SK-N-SH (cell line): ENCODE measurements at regions of chr12 and their contacts with region 1.

Region 1: GRCh38 chr12:22856178-22856577 is 231.2 kb downstream of the ETNK1 start:
- DNase-seq: peak; percentile 37
- H3K4me3 ChIP-seq: no peak overlapping the region
- H3K27ac ChIP-seq: no peak overlapping the region
- H3K4me1 ChIP-seq: no peaks in the 10 kb centered on the region; a peak in 1 of 4 replicates
- H3K27me3 ChIP-seq: no peaks in the 10 kb centered on the region; the same call in 1 of the 2 replicates
- CTCF ChIP-seq: peak; percentile 74
- EP300 ChIP-seq: no peak
- RAD21 ChIP-seq: peak; percentile 90

Region 2: GRCh38 chr12:22866406-22866805 is 10.2 kb after region 1 on chr12:
- CTCF ChIA-PET with region 1: interaction called, 14 read pairs
- POLR2A ChIA-PET with region 1: no interaction called
- DNase-seq: no peak
- H3K4me3 ChIP-seq: no peak overlapping the region
- H3K27ac ChIP-seq: no peak overlapping the region
- H3K4me1 ChIP-seq: no peaks in the 10 kb centered on the region
- H3K27me3 ChIP-seq: no peaks in the 10 kb centered on the region
- CTCF ChIP-seq: no peak
- EP300 ChIP-seq: no peak
- RAD21 ChIP-seq: no peak

Region 3: DNA sequence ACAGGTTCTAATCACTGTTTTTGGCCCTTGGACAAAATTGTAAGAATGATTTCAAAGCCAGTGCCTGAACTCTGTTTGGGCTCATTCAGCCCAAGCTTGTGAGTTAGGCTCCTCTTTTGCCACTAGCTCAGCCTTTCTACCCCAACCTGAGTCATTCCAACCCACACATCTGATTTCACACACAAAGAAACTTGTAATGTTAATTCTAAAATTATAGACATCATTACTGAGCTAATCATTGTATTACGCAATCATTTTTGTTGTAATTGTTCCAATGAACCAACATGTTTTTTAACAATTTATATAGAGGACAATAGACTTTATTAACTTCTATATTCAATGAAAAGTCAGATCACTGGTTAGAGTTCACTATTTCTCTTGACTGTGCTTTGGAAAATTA is 209.9 kb after region 1 on chr12:
- CTCF ChIA-PET with region 1: no interaction called
- POLR2A ChIA-PET with region 1: no interaction called
- DNase-seq: no peak
- H3K4me3 ChIP-seq: no peak overlapping the region
- H3K27ac ChIP-seq: no peak overlapping the region
- H3K4me1 ChIP-seq: no peaks in the 10 kb centered on the region
- H3K27me3 ChIP-seq: no peaks in the 10 kb centered on the region
- CTCF ChIP-seq: no peak
- EP300 ChIP-seq: no peak
- RAD21 ChIP-seq: no peak